ENCODE measurements at regions of chr7 and their contacts with region 1.

Region 1: GRCh38 chr7:132337450-132338080 is 238.7 kb downstream of the PLXNA4 start:
- DNase-seq: no peak
- ATAC-seq: no peak
- H3K4me3 ChIP-seq: no peak overlapping the region
- H3K27ac ChIP-seq: no peak overlapping the region
- H3K4me1 ChIP-seq: no peaks in the 10 kb centered on the region
- CTCF ChIP-seq: no peak
- EP300 ChIP-seq: no peak
- POLR2A ChIP-seq: no peak
- RAD21 ChIP-seq: no peak

Region 2: GRCh38 chr7:132318352-132319318 is 18.9 kb before region 1 on chr7:
- CTCF ChIA-PET with region 1: interaction called, 14 read pairs
- POLR2A ChIA-PET with region 1: no interaction called
- DNase-seq: peak; percentile 85 to 93
- ATAC-seq: peak; percentile 88 to 99
- H3K4me3 ChIP-seq: no peak overlapping the region
- H3K27ac ChIP-seq: no peak overlapping the region
- H3K4me1 ChIP-seq: no peaks in the 10 kb centered on the region
- CTCF ChIP-seq: peak; percentile 88
- EP300 ChIP-seq: no peak
- POLR2A ChIP-seq: no peak
- RAD21 ChIP-seq: peak; percentile 85 to 86

Measured in A549 (cell line).